ENCODE measurements at regions of chr10 and their contacts with region 1.

Region 1: DNA sequence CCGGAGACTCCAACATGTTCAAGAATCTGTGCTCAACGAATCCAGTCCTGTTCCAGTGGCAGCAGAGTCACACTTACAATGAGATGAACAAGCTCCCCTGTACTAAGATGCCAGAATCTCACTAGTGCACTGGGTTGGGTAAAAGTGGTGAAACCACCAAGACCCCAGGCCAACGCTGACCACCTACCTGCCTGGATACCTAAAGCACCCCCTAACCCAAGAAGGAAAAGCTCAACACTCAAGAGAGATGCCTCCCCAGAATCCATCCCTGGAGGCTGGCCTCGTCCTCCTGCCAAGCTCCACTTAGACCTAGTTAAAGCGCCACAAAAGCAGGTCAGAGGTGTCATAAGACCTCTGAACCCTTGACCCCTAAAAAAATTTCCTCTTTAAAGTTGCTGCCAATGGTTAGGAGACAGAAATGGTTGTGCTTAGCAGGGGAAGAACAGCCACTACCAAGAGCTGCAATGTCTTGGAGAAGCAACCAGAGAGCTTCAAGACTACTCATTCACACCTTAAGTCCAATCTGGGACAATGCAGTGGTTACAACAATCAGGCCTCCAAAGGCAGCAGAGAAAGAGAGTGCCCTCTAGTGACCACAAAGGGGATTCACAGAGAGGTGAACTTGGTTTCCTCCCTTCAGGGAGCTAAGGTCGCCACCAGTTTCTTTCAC is 94.6 kb upstream of the MACROH2A2 start:
- DNase-seq: peak; percentile 71
- H3K4me3 Mint-ChIP-seq: no peak overlapping the region
- H3K27ac Mint-ChIP-seq: no peak overlapping the region
- H3K4me1 Mint-ChIP-seq: peaks cover 13% of the 10 kb centered on the region
- H3K27me3 Mint-ChIP-seq: peaks cover 1% of the 10 kb centered on the region
- CTCF ChIP-seq: peak; percentile 82

Region 2: DNA sequence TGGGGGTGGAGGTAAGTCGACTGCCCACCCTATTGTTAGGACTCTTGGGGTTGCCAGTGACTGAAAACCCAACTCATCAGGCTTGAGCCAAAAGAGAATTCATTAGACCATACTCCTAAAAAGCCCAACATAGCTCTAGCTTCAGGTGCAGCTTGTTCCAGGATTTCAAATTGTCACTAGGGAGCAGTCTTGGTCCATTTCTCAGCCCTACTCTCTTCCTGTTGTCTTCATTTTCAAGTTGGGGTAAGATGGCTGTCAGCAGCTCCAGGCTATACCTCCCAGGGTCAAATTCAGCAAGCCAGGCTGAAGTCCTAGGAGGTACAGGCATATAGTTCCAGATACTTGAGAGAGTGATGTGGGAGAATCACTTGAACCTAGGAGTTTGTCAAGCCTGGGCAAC is 171.2 kb before region 1 on chr10:
- CTCF ChIA-PET with region 1: interaction called, 23 read pairs
- POLR2A ChIA-PET with region 1: no interaction called
- intact Hi-C with region 1: loop called (anchors 5 kb)
- DNase-seq: peak; percentile 41
- H3K4me3 Mint-ChIP-seq: no peak overlapping the region
- H3K27ac Mint-ChIP-seq: no peak overlapping the region
- H3K4me1 Mint-ChIP-seq: no peaks in the 10 kb centered on the region
- H3K27me3 Mint-ChIP-seq: peaks cover 23% of the 10 kb centered on the region
- CTCF ChIP-seq: peak; percentile 30

Region 3: DNA sequence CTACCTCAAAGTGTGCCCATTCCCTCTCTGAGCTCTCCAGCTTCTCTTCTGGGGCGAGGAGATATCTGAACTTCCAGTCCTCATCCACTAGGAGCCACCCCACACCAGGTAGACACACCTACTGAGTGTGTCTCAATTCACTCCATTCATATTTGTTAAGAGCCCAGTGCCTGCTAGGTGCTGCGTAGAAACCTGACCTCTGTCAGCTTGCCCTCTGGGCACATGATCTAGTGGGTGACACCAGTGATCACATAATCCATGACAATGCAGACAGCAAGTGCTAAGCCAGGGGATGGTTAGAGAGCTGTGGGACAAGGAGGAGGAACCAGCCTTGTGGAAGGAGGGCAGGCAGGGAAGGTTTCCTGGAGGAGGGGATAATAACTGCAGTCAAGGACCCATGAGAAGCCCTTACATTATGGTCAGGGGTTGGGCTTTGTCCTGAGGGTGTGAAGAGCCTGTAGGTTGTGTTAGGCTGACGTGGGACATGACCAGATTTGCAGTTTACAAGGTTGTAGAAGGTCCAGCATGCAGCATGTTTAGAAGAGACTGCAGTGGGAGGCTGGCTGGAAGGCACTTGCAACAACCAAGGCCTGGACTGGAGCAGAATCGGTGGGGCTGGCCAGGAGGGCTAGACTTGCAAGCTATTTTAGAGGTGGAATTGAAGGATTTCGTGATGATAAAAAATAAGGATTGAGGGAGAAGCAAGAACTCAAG is 74.6 kb before region 1 on chr10:
- CTCF ChIA-PET with region 1: interaction called, 6 read pairs
- POLR2A ChIA-PET with region 1: no interaction called
- intact Hi-C with region 1: loop called (anchors 1 kb)
- DNase-seq: peak; percentile 54
- H3K4me3 Mint-ChIP-seq: no peak overlapping the region
- H3K27ac Mint-ChIP-seq: no peak overlapping the region
- H3K4me1 Mint-ChIP-seq: no peaks in the 10 kb centered on the region
- H3K27me3 Mint-ChIP-seq: no peaks in the 10 kb centered on the region
- CTCF ChIP-seq: peak; percentile 9

Region 4: GRCh38 chr10:69901628-69902505 is 56.2 kb before region 1 on chr10:
- CTCF ChIA-PET with region 1: interaction called, 6 read pairs
- POLR2A ChIA-PET with region 1: no interaction called
- intact Hi-C with region 1: loop called (anchors 1 kb)
- DNase-seq: peak; percentile 40
- H3K4me3 Mint-ChIP-seq: no peak overlapping the region
- H3K27ac Mint-ChIP-seq: no peak overlapping the region
- H3K4me1 Mint-ChIP-seq: no peaks in the 10 kb centered on the region
- H3K27me3 Mint-ChIP-seq: no peaks in the 10 kb centered on the region
- CTCF ChIP-seq: peak; percentile 58

Region 5: DNA sequence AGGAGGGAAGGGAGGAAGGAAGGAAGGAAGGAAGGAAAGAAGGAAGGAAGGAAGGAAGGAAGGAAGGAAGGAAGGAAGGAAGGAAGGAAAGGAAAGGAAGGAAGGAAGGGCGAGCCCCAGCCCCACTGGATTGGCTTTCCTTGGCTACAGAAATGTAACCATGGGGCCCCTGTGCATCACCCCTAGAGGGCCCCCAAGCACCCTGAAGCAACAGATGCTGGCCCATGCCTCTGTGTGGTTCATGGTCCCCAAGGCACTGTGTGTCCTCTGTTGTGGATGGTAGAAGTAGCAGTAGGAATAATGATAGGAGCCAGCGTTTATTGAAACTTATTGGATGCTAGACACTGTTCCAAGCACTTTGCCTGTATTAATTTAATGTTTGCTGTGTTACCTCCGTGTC is 21.9 kb before region 1 on chr10:
- CTCF ChIA-PET with region 1: interaction called, 12 read pairs
- POLR2A ChIA-PET with region 1: interaction called, 3 read pairs
- intact Hi-C with region 1: no loop called
- DNase-seq: no peak
- H3K4me3 Mint-ChIP-seq: no peak overlapping the region
- H3K27ac Mint-ChIP-seq: no peak overlapping the region
- H3K4me1 Mint-ChIP-seq: no peaks in the 10 kb centered on the region
- H3K27me3 Mint-ChIP-seq: peaks cover 12% of the 10 kb centered on the region
- CTCF ChIP-seq: no peak

Region 6: GRCh38 chr10:70169649-70170364 is 211.8 kb after region 1 on chr10:
- CTCF ChIA-PET with region 1: no interaction called
- POLR2A ChIA-PET with region 1: no interaction called
- intact Hi-C with region 1: no loop called
- DNase-seq: no peak
- H3K4me3 Mint-ChIP-seq: peak overlapping the region; percentile 90
- H3K27ac Mint-ChIP-seq: peak overlapping the region; percentile 98
- H3K4me1 Mint-ChIP-seq: peaks cover 30% of the 10 kb centered on the region
- H3K27me3 Mint-ChIP-seq: no peaks in the 10 kb centered on the region
- CTCF ChIP-seq: no peak